ENCODE measurements at regions of chr6 and their contacts with region 1.

Region 1: DNA sequence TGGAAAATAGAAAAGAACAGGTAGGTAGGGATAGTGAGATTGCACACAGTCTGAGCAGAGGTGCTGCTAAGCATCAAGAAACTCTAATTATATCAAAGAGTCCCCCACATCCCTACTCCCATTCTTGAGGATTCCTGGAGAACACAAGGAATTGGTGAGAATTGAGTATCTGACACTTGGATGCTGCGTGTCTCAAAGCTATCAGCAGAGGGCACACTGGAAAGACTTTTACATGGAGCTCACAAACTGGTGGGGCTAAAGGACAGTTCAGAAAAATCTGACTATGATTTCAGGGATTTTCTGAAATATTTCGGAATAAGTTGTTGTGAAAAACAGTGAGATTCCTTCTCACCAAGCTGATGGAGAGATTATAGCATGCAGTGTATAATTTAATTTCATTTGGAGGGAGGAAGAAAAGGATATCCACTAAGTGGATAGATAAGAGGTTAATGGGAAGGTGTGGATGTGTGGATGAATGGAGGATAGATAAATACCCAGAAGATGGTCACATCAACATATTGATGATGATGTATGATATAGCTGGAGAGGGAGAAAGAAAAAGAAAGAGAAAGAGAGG is 215.4 kb upstream of the DEFB112 start:
- DNase-seq: peak; percentile 21
- H3K4me3 ChIP-seq: no peak overlapping the region
- H3K27ac ChIP-seq: no peak overlapping the region
- H3K4me1 ChIP-seq: peaks cover 2% of the 10 kb centered on the region
- H3K27me3 ChIP-seq: no peaks in the 10 kb centered on the region
- CTCF ChIP-seq: peak; percentile 73 to 84

Region 2: GRCh38 chr6:50213146-50213545 is 51.9 kb before region 1 on chr6:
- CTCF ChIA-PET with region 1: no interaction called
- dilution Hi-C with region 1: no loop called
- in situ Hi-C with region 1: no loop called
- intact Hi-C with region 1: no loop called
- DNase-seq: no peak
- H3K4me3 ChIP-seq: no peak overlapping the region
- H3K27ac ChIP-seq: no peak overlapping the region
- H3K4me1 ChIP-seq: no peaks in the 10 kb centered on the region
- H3K27me3 ChIP-seq: no peaks in the 10 kb centered on the region
- CTCF ChIP-seq: no peak

Region 3: DNA sequence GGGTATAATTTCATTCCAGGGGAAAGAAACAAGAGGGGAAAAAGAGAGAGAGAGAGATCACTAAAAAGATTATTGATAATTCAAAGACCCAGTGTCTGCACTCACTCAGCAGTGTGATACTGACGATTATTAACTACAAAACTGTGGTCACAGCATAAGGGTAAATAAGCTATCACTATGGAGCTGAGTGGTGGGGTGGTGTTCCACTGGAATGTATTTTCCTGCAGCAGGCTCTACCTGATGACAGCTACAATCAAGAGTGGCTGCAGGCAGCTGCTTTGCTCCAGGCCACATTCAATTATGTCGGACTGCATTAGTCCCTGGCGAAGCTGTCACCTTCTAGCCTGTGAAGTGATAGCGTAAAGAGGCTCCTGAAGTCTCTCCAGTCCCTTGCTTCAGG is 326.1 kb after region 1 on chr6:
- CTCF ChIA-PET with region 1: interaction called, 8 read pairs
- dilution Hi-C with region 1: no loop called
- in situ Hi-C with region 1: loop called in 1 of 2 experiments (anchors 25 kb)
- intact Hi-C with region 1: no loop called
- DNase-seq: no peak
- H3K4me3 ChIP-seq: no peak overlapping the region
- H3K27ac ChIP-seq: no peak overlapping the region
- H3K4me1 ChIP-seq: no peaks in the 10 kb centered on the region
- H3K27me3 ChIP-seq: peaks cover 3% of the 10 kb centered on the region
- CTCF ChIP-seq: no peak

Region 4: GRCh38 chr6:50602292-50602691 is 337.2 kb after region 1 on chr6:
- CTCF ChIA-PET with region 1: no interaction called
- dilution Hi-C with region 1: no loop called
- in situ Hi-C with region 1: loop called (anchors 10 to 25 kb)
- intact Hi-C with region 1: loop called (anchors 1 kb)
- DNase-seq: peak; percentile 11
- H3K4me3 ChIP-seq: no peak overlapping the region
- H3K27ac ChIP-seq: no peak overlapping the region
- H3K4me1 ChIP-seq: no peaks in the 10 kb centered on the region
- H3K27me3 ChIP-seq: no peaks in the 10 kb centered on the region
- CTCF ChIP-seq: peak; percentile 74 to 76

Region 5: DNA sequence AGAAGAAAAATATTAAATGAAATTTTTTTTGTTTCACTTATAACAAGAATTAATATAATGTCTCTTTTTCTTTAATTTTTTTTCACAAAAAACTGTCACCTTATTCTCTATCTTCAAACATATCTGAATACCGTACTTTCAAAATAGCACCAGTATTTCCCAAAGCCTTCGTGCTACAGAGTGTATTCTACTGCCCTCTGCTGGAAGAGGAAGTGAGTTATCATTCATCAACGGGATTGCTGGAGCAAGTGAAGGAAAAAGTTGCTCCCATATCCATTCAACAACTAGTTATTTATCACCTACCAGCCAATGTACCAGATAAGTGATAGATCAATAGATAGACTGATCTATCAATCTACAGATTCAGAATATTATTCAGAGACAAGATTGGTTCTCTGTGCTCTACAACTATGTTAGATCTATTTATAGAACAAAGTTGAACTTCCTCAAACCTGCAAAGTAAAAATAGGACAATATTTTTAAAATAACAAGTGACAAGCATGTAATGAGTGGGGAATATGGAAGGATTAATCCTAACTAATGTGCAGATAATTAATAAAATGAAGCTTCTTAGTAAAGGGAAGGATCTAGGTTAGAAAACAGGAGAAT is 526.9 kb after region 1 on chr6:
- CTCF ChIA-PET with region 1: no interaction called
- dilution Hi-C with region 1: no loop called
- in situ Hi-C with region 1: no loop called
- intact Hi-C with region 1: loop called (anchors 1 kb)
- DNase-seq: peak; percentile 33
- H3K4me3 ChIP-seq: no peak overlapping the region
- H3K27ac ChIP-seq: no peak overlapping the region
- H3K4me1 ChIP-seq: peaks cover 7% of the 10 kb centered on the region
- H3K27me3 ChIP-seq: peaks cover 2% of the 10 kb centered on the region
- CTCF ChIP-seq: peak; percentile 61 to 86

Measured in mammary epithelial cell (primary cell).